ENCODE measurements at regions of chr18 and their contacts with region 1.

Region 1: GRCh38 chr18:42053188-42053781 is 98.3 kb downstream of the PIK3C3 start:
- DNase-seq: peak in 1 of 2 experiments; percentile 58
- H3K4me3 ChIP-seq: no peak overlapping the region
- H3K27ac ChIP-seq: no peak overlapping the region
- H3K4me1 ChIP-seq: no peaks in the 10 kb centered on the region
- H3K27me3 ChIP-seq: no peaks in the 10 kb centered on the region
- CTCF ChIP-seq: peak in 2 of 3 experiments; percentile 42 to 73; a peak in 2 of 4 replicates
- EP300 ChIP-seq: no peak
- POLR2A ChIP-seq: no peak
- RAD21 ChIP-seq: peak; percentile 73 to 75

Region 2: DNA sequence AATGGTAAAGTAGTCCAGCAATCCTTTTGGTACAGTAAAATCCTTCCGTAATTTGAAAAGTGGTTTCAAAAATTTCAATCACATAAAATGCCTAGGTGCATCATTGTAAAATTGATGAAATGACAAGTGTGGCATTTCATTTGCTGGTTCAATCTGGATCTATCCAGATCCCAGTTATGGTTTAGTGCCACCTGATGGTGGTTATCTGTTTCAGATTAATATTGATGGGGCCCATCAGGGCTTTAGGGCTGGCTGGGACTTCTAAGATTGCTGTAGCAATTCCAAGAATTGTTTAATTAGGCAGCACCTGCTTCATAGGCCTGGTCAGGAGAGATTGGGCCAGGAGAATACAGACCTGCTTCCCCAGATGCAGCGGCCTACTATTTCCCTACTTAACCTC is 153.8 kb before region 1 on chr18:
- CTCF ChIA-PET with region 1: no interaction called
- POLR2A ChIA-PET with region 1: no interaction called
- DNase-seq: no peak
- H3K4me3 ChIP-seq: no peak overlapping the region
- H3K27ac ChIP-seq: no peak overlapping the region
- H3K4me1 ChIP-seq: no peaks in the 10 kb centered on the region
- H3K27me3 ChIP-seq: no peaks in the 10 kb centered on the region
- CTCF ChIP-seq: no peak
- EP300 ChIP-seq: no peak
- POLR2A ChIP-seq: no peak
- RAD21 ChIP-seq: peak; percentile 5 to 40; a peak in 3 of 4 replicates

Region 3: DNA sequence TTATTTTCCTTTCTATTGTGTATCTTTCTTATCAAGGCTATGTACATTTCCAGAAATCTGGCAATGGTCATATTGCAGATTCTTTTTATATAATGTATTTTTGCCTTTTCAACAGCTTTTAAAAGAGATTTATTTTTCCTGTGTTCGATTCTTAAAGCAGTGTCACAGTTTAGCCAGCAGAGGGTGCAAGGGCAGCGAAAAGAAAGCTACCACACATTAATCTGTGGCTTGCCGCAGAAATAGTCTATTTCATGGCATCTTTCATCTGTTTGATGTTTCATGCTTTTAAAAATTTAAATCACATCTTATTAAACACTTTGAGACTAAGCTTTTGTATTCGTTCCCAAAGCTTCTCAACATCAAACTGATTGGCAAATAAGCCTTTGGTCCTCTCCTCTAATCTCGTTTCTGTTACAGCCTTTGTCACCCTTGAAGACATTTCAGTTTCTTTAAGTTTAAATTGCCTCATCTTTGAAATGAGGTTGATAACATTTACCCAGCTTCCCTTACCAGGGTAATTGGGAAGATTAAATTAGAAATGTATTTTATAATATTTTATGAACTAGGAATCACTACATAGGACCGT is 24.9 kb before region 1 on chr18:
- CTCF ChIA-PET with region 1: interaction called, 13 read pairs
- POLR2A ChIA-PET with region 1: no interaction called
- DNase-seq: no peak
- H3K4me3 ChIP-seq: no peak overlapping the region
- H3K27ac ChIP-seq: no peak overlapping the region
- H3K4me1 ChIP-seq: no peaks in the 10 kb centered on the region
- H3K27me3 ChIP-seq: no peaks in the 10 kb centered on the region
- CTCF ChIP-seq: peak in 2 of 3 experiments; percentile 40 to 65; a peak in 2 of 4 replicates
- EP300 ChIP-seq: no peak
- POLR2A ChIP-seq: no peak
- RAD21 ChIP-seq: peak; percentile 13 to 25; a peak in 3 of 4 replicates

Region 4: DNA sequence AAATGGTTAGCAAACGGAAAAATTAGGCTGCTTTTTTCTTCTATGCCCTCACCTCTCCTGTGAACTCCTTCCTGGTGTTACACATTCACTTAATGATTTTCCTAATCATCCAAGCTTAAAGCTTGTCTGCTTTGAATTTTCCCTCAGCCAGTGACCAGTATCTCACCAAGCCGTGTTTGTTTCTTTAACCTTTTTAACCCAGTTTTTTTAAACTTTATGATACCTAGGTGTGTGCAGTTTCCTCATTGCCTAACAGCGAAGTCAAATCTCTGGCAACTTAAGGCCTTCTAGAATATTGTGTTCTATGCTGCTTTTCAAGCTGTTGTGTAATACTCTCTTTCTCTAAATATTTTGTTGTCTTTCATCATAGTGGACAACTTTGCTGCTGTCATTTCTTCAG is 14.7 kb after region 1 on chr18:
- CTCF ChIA-PET with region 1: interaction called, 21 read pairs
- POLR2A ChIA-PET with region 1: no interaction called
- DNase-seq: no peak
- H3K4me3 ChIP-seq: no peak overlapping the region
- H3K27ac ChIP-seq: no peak overlapping the region
- H3K4me1 ChIP-seq: no peaks in the 10 kb centered on the region
- H3K27me3 ChIP-seq: no peaks in the 10 kb centered on the region
- CTCF ChIP-seq: no peak
- EP300 ChIP-seq: no peak
- POLR2A ChIP-seq: no peak
- RAD21 ChIP-seq: no peak

Region 5: GRCh38 chr18:42545825-42546224 is 492.5 kb after region 1 on chr18:
- CTCF ChIA-PET with region 1: no interaction called
- POLR2A ChIA-PET with region 1: no interaction called
- DNase-seq: no peak
- H3K4me3 ChIP-seq: no peak overlapping the region
- H3K27ac ChIP-seq: no peak overlapping the region
- H3K4me1 ChIP-seq: peaks cover 0 to 5% (median 1%) of the 10 kb centered on the region in 4 experiments; a peak in 3 of 7 replicates
- H3K27me3 ChIP-seq: no peaks in the 10 kb centered on the region
- CTCF ChIP-seq: no peak
- EP300 ChIP-seq: no peak
- POLR2A ChIP-seq: no peak
- RAD21 ChIP-seq: no peak

Region 6: GRCh38 chr18:43563780-43564179 is 1510.5 kb after region 1 on chr18:
- CTCF ChIA-PET with region 1: interaction called, 13 read pairs
- POLR2A ChIA-PET with region 1: no interaction called
- DNase-seq: no peak
- H3K4me3 ChIP-seq: no peak overlapping the region
- H3K27ac ChIP-seq: no peak overlapping the region
- H3K4me1 ChIP-seq: no peaks in the 10 kb centered on the region
- H3K27me3 ChIP-seq: no peaks in the 10 kb centered on the region
- CTCF ChIP-seq: peak in 2 of 3 experiments; percentile 70; a peak in 3 of 4 replicates
- EP300 ChIP-seq: no peak
- POLR2A ChIP-seq: no peak
- RAD21 ChIP-seq: peak; percentile 90 to 96

Measured in H1 (cell line).